ENCODE measurements at regions of chr5 and their contacts with region 1.

Region 1: GRCh38 chr5:18244309-18244708 is 610.0 kb downstream of the TAF11L14 start:
- DNase-seq: no peak
- H3K4me3 ChIP-seq: no peak overlapping the region
- H3K27ac ChIP-seq: no peak overlapping the region
- H3K4me1 ChIP-seq: no peaks in the 10 kb centered on the region
- H3K27me3 ChIP-seq: no peaks in the 10 kb centered on the region
- CTCF ChIP-seq: no peak

Region 2: DNA sequence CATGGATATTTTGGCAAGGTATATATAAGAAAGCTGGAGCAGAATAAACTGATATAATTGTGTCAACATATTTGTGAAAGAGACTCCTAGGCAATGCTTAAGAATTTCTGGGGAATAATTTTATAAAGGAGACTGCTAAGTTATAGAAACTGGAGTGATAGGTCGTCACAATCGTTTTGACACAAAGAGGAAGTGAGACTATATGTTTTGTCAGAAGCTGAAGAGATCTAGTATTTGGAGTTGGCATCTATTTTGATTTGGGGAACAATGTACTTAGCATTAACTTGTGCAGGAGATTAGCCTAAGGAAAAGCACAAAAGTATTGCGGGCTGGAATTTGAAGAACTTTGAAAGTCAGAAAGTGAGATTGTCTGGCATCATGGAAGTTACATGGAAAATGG is 27.6 kb before region 1 on chr5:
- CTCF ChIA-PET with region 1: no interaction called
- POLR2A ChIA-PET with region 1: interaction called, 10 read pairs
- intact Hi-C with region 1: no loop called
- DNase-seq: no peak
- H3K4me3 ChIP-seq: no peak overlapping the region
- H3K27ac ChIP-seq: no peak overlapping the region
- H3K4me1 ChIP-seq: no peaks in the 10 kb centered on the region
- H3K27me3 ChIP-seq: no peaks in the 10 kb centered on the region
- CTCF ChIP-seq: no peak

Region 3: GRCh38 chr5:18959535-18959934 is 715.2 kb after region 1 on chr5:
- CTCF ChIA-PET with region 1: no interaction called
- POLR2A ChIA-PET with region 1: no interaction called
- intact Hi-C with region 1: no loop called
- DNase-seq: no peak
- H3K4me3 ChIP-seq: no peak overlapping the region
- H3K27ac ChIP-seq: no peak overlapping the region
- H3K4me1 ChIP-seq: no peaks in the 10 kb centered on the region
- H3K27me3 ChIP-seq: no peaks in the 10 kb centered on the region
- CTCF ChIP-seq: no peak

Measured in A673 (cell line).